Mammary epithelial cell (primary cell): ENCODE measurements at regions of chr7 and their contacts with region 1.

Region 1: DNA sequence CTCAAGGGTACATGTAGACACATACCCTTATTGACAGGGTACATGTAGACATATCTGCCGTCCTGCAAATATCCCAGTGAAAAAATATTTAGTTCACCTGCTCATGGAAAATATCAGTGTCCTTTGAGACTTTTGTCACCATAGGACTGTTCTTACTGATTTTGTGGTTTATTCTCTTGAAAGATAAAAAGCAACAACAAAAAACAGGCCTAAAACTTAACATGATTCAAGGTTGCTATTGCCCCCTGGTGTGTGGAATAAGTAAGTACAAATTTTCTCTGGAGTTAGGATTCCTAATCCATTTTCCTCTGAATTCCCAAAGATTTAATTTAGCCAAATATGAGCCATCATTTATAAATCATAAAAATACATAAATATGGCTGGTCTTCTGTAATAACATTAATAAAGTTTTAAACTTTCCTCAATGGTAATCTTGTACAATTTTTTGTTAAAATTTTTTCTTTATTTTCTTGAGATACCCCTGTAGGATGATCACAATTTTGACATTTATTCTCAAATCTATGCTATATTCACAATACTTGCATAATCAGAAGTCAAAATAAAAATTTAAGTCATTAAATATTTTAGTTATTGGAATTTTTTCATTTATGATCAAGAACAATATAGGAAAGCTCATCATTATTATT is 741.4 kb upstream of the POT1 start:
- DNase-seq: peak; percentile 3
- H3K4me3 ChIP-seq: no peak overlapping the region
- H3K27ac ChIP-seq: no peak overlapping the region
- H3K4me1 ChIP-seq: no peaks in the 10 kb centered on the region
- H3K27me3 ChIP-seq: no peaks in the 10 kb centered on the region
- CTCF ChIP-seq: peak; percentile 61 to 70

Region 2: DNA sequence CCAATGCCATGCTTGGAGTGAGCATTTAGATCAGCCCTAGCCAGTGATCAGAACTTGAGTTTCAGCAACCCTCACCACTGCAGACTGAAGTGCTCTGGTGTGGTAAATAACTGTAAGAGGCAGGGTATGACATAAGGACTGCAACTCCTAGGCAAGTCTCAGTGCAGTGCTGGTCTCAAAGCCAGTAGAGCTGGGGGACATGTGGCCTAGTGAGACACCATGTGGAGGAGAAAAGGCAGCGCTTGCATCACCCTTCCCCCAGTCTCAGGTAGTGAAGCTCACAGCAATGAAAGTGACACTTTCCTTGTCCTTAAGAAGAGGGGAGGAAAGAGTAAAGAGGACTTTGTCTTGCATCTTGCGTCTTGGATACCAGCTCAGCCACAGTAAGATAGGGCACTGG is 354.6 kb before region 1 on chr7:
- CTCF ChIA-PET with region 1: no interaction called
- dilution Hi-C with region 1: no loop called
- in situ Hi-C with region 1: no loop called
- intact Hi-C with region 1: loop called (anchors 10 kb)
- DNase-seq: peak; percentile 65
- H3K4me3 ChIP-seq: no peak overlapping the region
- H3K27ac ChIP-seq: no peak overlapping the region
- H3K4me1 ChIP-seq: no peaks in the 10 kb centered on the region
- H3K27me3 ChIP-seq: no peaks in the 10 kb centered on the region
- CTCF ChIP-seq: peak; percentile 51 to 85

Region 3: DNA sequence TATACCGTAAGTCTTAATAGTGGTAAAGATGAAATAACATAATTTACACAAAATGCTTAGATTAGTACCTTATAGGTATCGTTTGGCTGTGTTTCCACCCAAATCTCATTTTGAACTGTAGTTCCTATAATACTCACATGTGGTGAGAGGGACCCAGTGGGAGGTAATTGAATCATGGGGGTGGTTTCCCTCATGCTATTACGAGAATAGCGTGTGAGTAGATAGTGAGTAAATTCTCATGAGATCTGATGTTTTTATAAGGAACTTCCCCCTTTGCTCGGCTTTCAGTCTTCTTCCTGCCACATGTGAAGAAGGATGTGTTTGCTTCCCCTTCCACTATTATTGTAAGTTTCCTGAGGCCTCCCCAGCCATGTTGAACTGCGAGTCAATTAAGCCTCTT is 315.1 kb before region 1 on chr7:
- CTCF ChIA-PET with region 1: no interaction called
- dilution Hi-C with region 1: no loop called
- in situ Hi-C with region 1: loop called in 1 of 2 experiments (anchors 25 kb)
- intact Hi-C with region 1: no loop called
- DNase-seq: peak; percentile 1
- H3K4me3 ChIP-seq: no peak overlapping the region
- H3K27ac ChIP-seq: no peak overlapping the region
- H3K4me1 ChIP-seq: no peaks in the 10 kb centered on the region
- H3K27me3 ChIP-seq: no peaks in the 10 kb centered on the region
- CTCF ChIP-seq: no peak

Region 4: DNA sequence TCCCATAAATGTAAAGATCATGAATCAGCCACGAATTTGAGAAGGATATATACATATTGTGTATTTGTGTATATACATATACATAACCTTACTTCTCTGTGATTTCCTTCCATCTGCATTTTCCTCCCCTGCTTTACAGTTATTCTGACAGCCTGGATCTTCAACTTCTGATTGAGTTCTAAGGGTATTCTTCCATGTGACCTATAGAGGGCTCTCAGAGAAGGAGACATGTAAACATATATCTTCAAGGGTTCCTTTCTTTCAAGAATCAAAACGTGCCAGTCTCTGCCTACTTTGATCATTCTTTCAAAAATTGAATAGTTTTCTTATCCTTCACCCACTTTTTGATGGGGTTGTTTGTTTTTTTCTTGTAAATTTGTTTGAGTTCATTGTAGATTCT is 287.7 kb before region 1 on chr7:
- CTCF ChIA-PET with region 1: no interaction called
- dilution Hi-C with region 1: no loop called
- in situ Hi-C with region 1: no loop called
- intact Hi-C with region 1: loop called (anchors 2 kb)
- DNase-seq: peak; percentile 4
- H3K4me3 ChIP-seq: no peak overlapping the region
- H3K27ac ChIP-seq: no peak overlapping the region
- H3K4me1 ChIP-seq: no peaks in the 10 kb centered on the region
- H3K27me3 ChIP-seq: no peaks in the 10 kb centered on the region
- CTCF ChIP-seq: peak; percentile 19 to 59

Region 5: DNA sequence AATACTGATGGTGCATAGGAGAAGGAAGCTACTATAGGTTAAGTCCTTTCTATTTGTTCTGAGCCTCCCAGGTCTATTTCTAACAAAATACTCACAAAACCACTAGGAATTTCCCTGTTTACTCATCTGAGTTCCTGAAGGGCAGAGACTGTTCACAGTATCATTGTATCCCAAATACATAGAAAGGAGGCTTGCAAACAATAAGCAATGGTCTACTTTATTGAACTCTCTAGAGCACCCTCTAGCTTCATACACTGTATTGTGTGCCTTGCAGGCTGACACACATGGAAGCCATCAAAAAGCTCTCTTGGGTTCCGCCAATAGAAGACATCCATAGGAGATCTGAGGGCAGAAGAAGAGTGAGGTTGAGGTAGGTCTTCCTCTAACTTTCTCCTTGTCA is 755.6 kb after region 1 on chr7:
- CTCF ChIA-PET with region 1: no interaction called
- dilution Hi-C with region 1: no loop called
- in situ Hi-C with region 1: no loop called
- intact Hi-C with region 1: no loop called
- DNase-seq: peak; percentile 3
- H3K4me3 ChIP-seq: no peak overlapping the region
- H3K27ac ChIP-seq: no peak overlapping the region
- H3K4me1 ChIP-seq: no peaks in the 10 kb centered on the region
- H3K27me3 ChIP-seq: no peaks in the 10 kb centered on the region
- CTCF ChIP-seq: no peak